Esophagus muscularis mucosa (tissue), 4 donors: ENCODE measurements at regions of chr2 and their contacts with region 1.

Region 1: GRCh38 chr2:112941753-112942658 is 31.0 kb downstream of the IL37 start:
- DNase-seq: peak; percentile 81
- H3K4me3 ChIP-seq: no peak overlapping the region
- H3K27ac ChIP-seq: no peak overlapping the region
- H3K4me1 ChIP-seq: peaks cover 0 to 7% (median 5%) of the 10 kb centered on the region in 4 donors
- H3K27me3 ChIP-seq: no peaks in the 10 kb centered on the region
- CTCF ChIP-seq: peak; percentile 57 to 82 (median 70)
- EP300 ChIP-seq: no peak
- POLR2A ChIP-seq: no peak

Region 2: GRCh38 chr2:112749755-112750559 is 192.0 kb before region 1 on chr2:
- intact Hi-C with region 1: loop called (anchors 1 kb)
- DNase-seq: no peak
- H3K4me3 ChIP-seq: no peak overlapping the region
- H3K27ac ChIP-seq: peak overlapping the region in 1 of 4 donors; percentile 0
- H3K4me1 ChIP-seq: peaks cover 0 to 37% (median 26%) of the 10 kb centered on the region in 4 donors
- H3K27me3 ChIP-seq: no peaks in the 10 kb centered on the region
- CTCF ChIP-seq: peak in 2 of 3 experiments; percentile 81 to 92
- EP300 ChIP-seq: no peak
- POLR2A ChIP-seq: no peak

Region 3: GRCh38 chr2:113257516-113258264 is 315.7 kb after region 1 on chr2:
- intact Hi-C with region 1: no loop called
- DNase-seq: no peak
- H3K4me3 ChIP-seq: no peak overlapping the region
- H3K27ac ChIP-seq: no peak overlapping the region
- H3K4me1 ChIP-seq: peaks cover 0 to 17% (median 9%) of the 10 kb centered on the region in 4 donors
- H3K27me3 ChIP-seq: no peaks in the 10 kb centered on the region
- CTCF ChIP-seq: no peak
- EP300 ChIP-seq: no peak
- POLR2A ChIP-seq: no peak